Activated CD4-positive, alpha-beta T cell treated with anti-CD3 and anti-CD28 coated beads for 36 hours (primary cell): ENCODE measurements at regions of chr3 and their contacts with region 1.

Region 1: DNA sequence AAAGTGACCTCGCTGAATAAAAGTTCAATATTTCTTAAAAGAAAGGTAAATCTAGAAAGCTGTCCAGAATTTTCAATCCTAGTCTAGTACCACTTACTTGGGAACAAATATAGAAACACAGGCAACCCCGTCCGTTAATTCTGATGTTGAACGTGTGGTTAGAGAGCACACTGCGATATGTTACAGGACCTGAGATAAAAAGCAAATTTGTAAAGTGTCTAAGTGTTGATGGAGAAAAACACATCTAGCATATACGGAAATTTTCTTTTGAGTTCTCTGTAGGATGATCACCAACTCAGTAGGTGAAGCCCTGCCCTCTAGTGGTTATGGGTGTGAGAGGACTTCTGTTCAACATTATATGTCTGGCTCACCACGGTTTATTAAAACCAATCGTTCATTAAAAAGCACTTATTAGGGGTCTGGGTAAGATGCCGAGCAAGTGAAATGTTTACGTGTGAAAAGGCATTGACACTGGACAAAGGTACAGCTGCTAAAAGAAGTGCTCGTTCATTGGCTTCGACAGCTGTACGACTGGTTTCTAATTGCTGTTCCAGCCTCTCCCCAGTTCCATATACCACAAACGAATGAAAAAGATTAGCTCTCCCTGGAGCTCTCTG is 1.0 kb upstream of the ATP2C1 start:
- DNase-seq: peak; percentile 79
- ATAC-seq: peak; percentile 56
- H3K4me3 Mint-ChIP-seq: peak overlapping the region; percentile 94
- H3K27ac Mint-ChIP-seq: peak overlapping the region; percentile 99
- H3K4me1 Mint-ChIP-seq: peaks cover 34% of the 10 kb centered on the region
- H3K27me3 Mint-ChIP-seq: no peaks in the 10 kb centered on the region

Region 2: GRCh38 chr3:129893581-129894070 is 999.2 kb before region 1 on chr3 and contains the start of gene TMCC1:
- CTCF ChIA-PET with region 1: no interaction called
- POLR2A ChIA-PET with region 1: no interaction called
- intact Hi-C with region 1: loop called in 1 of 2 experiments (anchors 5 kb)
- DNase-seq: peak; percentile 92
- ATAC-seq: peak; percentile 92
- H3K4me3 Mint-ChIP-seq: peak within 1 kb of the TSS; percentile 86
- H3K27ac Mint-ChIP-seq: peak within 1 kb of the TSS; percentile 85
- H3K4me1 Mint-ChIP-seq: peaks cover 36% of the 10 kb centered on the region
- H3K27me3 Mint-ChIP-seq: no peaks in the 10 kb centered on the region
- total RNA-seq, gene TMCC1: 14.8 to 17.3 TPM

Region 3: DNA sequence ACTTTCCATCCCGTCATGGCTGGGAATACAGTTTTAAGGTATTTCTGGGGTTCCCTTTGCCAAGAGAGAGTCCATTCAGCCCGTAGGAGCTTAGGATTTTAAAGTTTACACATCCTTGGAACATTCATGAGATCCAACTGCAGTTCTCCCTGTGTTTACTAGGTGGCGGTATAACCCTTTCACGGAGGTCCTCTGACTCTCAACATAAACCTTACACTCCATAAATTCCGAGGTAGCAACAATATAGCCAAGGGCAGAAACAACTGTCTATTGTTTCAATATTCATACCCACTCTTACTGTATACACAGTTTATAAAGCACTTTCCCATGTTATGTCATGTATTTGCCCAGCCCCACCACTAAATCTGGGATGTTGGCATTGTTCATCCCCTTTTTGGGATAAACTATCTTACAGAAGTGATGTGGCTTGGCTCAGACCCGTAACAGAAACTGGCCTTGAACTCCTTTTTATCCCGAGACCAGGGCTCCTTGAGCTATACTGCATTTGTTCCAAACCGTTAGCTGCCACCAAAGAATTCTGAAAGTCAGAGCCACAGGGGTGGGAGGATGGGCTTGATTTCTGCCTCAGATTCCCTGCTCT is 616.6 kb before region 1 on chr3:
- CTCF ChIA-PET with region 1: interaction called, 3 read pairs
- POLR2A ChIA-PET with region 1: no interaction called
- intact Hi-C with region 1: loop called in 1 of 2 experiments (anchors 1 kb)
- DNase-seq: no peak
- ATAC-seq: no peak
- H3K4me3 Mint-ChIP-seq: no peak overlapping the region
- H3K27ac Mint-ChIP-seq: no peak overlapping the region
- H3K4me1 Mint-ChIP-seq: no peaks in the 10 kb centered on the region
- H3K27me3 Mint-ChIP-seq: peaks cover 11% of the 10 kb centered on the region

Region 4: DNA sequence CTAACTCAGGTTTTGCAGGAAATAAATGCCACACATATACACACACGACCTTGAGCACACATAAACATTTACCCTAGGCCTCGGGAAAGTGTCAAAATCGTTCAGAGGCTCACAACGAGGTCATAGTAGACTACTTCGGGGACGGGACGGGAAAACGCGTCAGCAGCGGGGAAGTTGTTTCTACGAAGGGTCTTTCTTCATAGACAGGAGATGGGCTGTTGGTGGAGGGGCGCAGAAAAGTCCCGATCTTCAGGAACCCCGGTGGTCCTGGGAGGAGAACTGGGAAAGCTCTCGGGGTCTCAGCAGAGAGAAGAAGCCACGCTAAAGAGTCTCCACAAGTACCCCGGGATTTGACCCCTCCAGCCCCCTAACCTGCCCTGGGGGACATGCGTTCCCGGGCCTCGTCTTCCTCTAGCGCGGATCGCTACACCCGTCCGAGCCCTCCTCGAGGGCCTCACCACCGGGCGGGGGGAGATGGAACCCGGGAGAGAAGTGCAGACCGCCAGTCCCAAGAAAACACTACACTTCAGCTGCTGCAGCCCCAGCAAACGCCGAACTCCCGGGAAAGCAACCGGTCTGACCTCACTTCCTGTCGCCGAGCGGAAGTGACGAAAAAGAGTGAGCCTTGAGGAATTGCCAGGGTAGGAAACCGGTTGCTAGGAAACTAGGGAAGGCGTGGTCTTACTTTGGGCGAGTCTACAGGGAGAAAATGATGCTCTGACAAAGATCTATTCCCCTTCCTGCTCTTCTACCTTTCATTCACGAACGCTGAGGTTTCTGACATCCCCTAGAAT is 146.4 kb before region 1 on chr3 and contains the start of gene PIK3R4:
- CTCF ChIA-PET with region 1: interaction called, 8 read pairs
- POLR2A ChIA-PET with region 1: interaction called, 10 read pairs
- intact Hi-C with region 1: loop called (anchors 1 kb)
- DNase-seq: peak; percentile 96
- ATAC-seq: peak; percentile 83
- H3K4me3 Mint-ChIP-seq: no peak within 1 kb of the TSS
- H3K27ac Mint-ChIP-seq: peak within 1 kb of the TSS; percentile 95
- H3K4me1 Mint-ChIP-seq: peaks cover 42% of the 10 kb centered on the region
- H3K27me3 Mint-ChIP-seq: no peaks in the 10 kb centered on the region
- total RNA-seq, gene PIK3R4: 27.3 to 32.3 TPM

Region 5: DNA sequence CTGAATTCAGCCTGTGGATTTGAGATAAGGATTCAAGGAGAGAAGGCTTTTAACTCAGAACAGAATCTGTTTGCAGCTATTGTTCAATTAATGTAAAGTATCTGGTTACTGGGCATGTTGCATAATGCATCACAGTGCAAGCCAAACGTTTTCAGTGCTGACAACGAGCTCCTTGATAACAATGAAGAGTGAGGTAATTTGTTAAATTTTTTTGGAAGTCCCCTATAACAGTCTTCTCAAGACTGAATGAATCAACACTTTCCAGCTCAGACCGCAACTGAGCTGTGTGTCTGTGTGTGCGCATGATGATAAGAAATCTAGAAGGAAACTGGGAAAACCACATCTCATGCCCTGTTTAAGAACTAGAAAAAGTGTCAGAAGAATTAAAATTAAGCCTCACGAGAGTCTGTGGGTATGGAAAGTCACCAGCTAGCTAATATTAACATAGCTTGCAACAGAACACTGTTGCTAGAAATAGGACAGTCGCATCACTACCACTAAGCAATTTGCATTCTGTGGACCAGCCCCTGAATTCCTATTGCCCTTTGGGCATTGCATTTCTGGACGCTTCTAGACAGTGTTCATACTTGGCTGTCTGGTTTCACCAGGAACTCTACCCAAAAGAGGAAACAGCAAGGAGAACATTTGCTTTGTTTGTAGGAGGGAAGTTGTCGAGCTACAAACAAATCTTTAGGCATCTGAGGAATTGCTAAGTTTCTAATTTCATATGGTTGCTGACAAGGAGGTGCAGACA is 42.6 kb before region 1 on chr3:
- CTCF ChIA-PET with region 1: interaction called, 11 read pairs
- POLR2A ChIA-PET with region 1: interaction called, 3 read pairs
- intact Hi-C with region 1: loop called (anchors 1 to 2 kb)
- DNase-seq: peak; percentile 77
- ATAC-seq: peak; percentile 98
- H3K4me3 Mint-ChIP-seq: peak overlapping the region; percentile 26
- H3K27ac Mint-ChIP-seq: peak overlapping the region; percentile 26
- H3K4me1 Mint-ChIP-seq: peaks cover 21% of the 10 kb centered on the region
- H3K27me3 Mint-ChIP-seq: peaks cover 16% of the 10 kb centered on the region

Region 6: GRCh38 chr3:131026321-131027178 is 133.7 kb after region 1 on chr3 and contains the starts of genes ASTE1 and NEK11:
- CTCF ChIA-PET with region 1: interaction called, 3 read pairs
- POLR2A ChIA-PET with region 1: interaction called, 17 read pairs
- intact Hi-C with region 1: loop called (anchors 1 kb)
- DNase-seq: peak; percentile 95
- ATAC-seq: peak; percentile 98
- H3K4me3 Mint-ChIP-seq: peak within 1 kb of the TSS; percentile 90
- H3K27ac Mint-ChIP-seq: peak within 1 kb of the TSS; percentile 96
- H3K4me1 Mint-ChIP-seq: peaks cover 46% of the 10 kb centered on the region
- H3K27me3 Mint-ChIP-seq: no peaks in the 10 kb centered on the region
- total RNA-seq, gene ASTE1: 8.2 to 9.1 TPM
- total RNA-seq, gene NEK11: 1.0 to 1.3 TPM

Region 7: GRCh38 chr3:131110087-131110486 is 217.2 kb after region 1 on chr3:
- CTCF ChIA-PET with region 1: no interaction called
- POLR2A ChIA-PET with region 1: no interaction called
- intact Hi-C with region 1: no loop called
- DNase-seq: no peak
- ATAC-seq: no peak
- H3K4me3 Mint-ChIP-seq: no peak overlapping the region
- H3K27ac Mint-ChIP-seq: no peak overlapping the region
- H3K4me1 Mint-ChIP-seq: no peaks in the 10 kb centered on the region
- H3K27me3 Mint-ChIP-seq: no peaks in the 10 kb centered on the region

Region 8: GRCh38 chr3:131502530-131503245 is 609.8 kb after region 1 on chr3 and contains the start of gene MRPL3:
- CTCF ChIA-PET with region 1: no interaction called
- POLR2A ChIA-PET with region 1: no interaction called
- intact Hi-C with region 1: loop called in 1 of 2 experiments (anchors 5 kb)
- DNase-seq: peak; percentile 92
- ATAC-seq: peak; percentile 97
- H3K4me3 Mint-ChIP-seq: peak within 1 kb of the TSS; percentile 98
- H3K27ac Mint-ChIP-seq: peak within 1 kb of the TSS; percentile 93
- H3K4me1 Mint-ChIP-seq: peaks cover 33% of the 10 kb centered on the region
- H3K27me3 Mint-ChIP-seq: no peaks in the 10 kb centered on the region
- total RNA-seq, gene MRPL3: 166 to 278 TPM